Endothelial cell of umbilical vein (primary cell): ENCODE measurements at regions of chr3 and their contacts with region 1.

Region 1: DNA sequence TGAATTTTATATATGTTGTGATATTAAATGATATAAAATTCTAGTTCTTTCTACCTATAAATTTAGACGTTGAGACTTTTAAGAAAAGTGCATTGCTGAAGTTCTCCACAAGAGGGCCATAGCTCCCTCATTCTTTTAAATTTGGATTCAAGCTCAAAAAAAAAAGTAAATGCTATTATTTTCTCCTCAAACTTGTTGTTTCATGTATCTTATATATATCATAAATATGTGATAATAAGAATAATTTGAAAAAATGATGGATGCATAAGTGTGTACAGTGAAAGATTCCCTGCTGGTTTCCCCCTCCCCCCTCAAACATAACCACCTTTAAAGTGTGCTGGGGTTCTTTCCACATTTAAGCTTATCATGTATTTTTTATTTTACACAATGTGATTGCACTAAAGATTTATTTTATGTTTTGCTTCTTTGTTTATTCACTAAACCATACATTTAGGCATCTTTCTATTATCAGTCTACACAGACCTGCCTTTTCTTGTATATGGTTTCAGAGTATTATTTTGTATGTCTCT is 769.4 kb upstream of the GOLIM4 start:
- DNase-seq: peak; percentile 71
- H3K4me3 ChIP-seq: no peak overlapping the region
- H3K27ac ChIP-seq: no peak overlapping the region
- H3K4me1 ChIP-seq: no peaks in the 10 kb centered on the region
- H3K27me3 ChIP-seq: peaks cover 0 to 3% of the 10 kb centered on the region in 2 experiments
- CTCF ChIP-seq: peak; percentile 48 to 52
- POLR2A ChIP-seq: no peak

Region 2: DNA sequence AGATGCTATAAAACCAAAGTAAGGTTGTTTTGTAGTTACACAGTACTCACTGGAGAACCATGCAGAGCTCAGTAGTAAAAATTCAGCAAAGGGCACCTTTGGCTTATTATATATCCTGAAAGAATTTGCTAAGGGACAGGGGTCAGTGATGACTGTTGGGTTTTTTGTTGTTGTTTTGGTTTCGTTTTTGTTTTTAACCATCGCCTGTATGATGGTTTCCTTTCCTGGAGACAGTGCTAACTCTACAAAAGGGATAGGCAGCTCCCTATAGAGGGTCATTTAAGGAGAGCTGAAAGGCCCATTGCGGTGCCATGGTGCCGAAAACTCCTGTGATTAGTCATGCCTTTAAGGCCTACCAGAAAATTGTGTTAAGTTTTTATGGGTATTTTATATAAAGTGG is 651.2 kb before region 1 on chr3:
- CTCF ChIA-PET with region 1: interaction called, 15 read pairs
- POLR2A ChIA-PET with region 1: no interaction called
- dilution Hi-C with region 1: no loop called
- intact Hi-C with region 1: no loop called
- DNase-seq: no peak
- H3K4me3 ChIP-seq: no peak overlapping the region
- H3K27ac ChIP-seq: no peak overlapping the region
- H3K4me1 ChIP-seq: no peaks in the 10 kb centered on the region
- H3K27me3 ChIP-seq: peaks cover 2 to 5% of the 10 kb centered on the region in 2 experiments
- CTCF ChIP-seq: no peak
- POLR2A ChIP-seq: no peak

Region 3: DNA sequence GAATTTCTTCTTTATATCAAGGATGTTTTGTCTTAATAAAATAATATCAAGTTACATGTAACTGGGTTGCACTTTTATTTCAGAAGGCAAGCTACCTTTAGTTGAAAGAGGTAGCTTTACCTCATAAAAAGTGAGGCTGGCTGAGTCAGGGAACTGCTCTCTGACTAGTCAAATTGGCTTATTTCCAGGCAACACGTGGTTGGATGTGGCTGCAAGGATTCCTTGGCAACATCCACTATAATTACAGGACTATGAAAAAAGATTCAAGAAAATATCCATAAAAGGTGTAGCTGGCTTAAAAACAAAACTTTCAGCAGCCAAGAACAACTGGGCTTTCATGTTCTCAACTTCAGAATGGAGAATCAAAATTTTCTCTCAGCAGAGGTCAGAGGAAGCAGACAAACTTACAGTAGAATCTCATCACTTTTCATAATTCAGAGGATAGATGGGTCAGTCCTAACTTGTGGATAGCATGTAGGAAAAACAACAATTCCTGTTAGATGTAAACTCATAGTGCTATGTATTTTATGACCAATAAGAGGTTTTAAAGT is 19.3 kb after region 1 on chr3:
- CTCF ChIA-PET with region 1: interaction called, 18 read pairs
- POLR2A ChIA-PET with region 1: no interaction called
- dilution Hi-C with region 1: no loop called
- intact Hi-C with region 1: no loop called
- DNase-seq: peak; percentile 86
- H3K4me3 ChIP-seq: no peak overlapping the region
- H3K27ac ChIP-seq: no peak overlapping the region
- H3K4me1 ChIP-seq: peaks cover 12% of the 10 kb centered on the region
- H3K27me3 ChIP-seq: no peaks in the 10 kb centered on the region
- CTCF ChIP-seq: no peak
- POLR2A ChIP-seq: no peak

Region 4: DNA sequence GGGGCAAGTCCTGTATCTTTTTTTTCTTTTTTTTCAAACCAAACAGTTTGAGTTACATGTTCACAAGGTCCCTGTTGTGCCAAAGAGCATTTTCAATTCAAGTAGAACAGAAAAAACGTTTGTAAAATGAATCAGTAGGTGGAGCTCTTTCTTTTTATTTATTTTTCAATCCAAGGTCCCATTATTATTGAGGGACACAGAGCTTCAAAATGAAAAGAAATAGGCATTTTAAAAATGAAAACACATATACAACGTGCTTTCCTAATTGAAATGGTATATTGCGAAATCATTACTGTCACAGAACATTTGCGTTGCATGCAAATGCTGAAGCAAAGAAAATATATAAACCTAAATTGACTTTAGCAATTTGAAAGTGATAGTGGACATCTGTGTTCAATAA is 87.5 kb after region 1 on chr3:
- CTCF ChIA-PET with region 1: interaction called, 28 read pairs
- POLR2A ChIA-PET with region 1: no interaction called
- dilution Hi-C with region 1: no loop called
- intact Hi-C with region 1: loop called (anchors 5 kb)
- DNase-seq: peak; percentile 62
- H3K4me3 ChIP-seq: no peak overlapping the region
- H3K27ac ChIP-seq: no peak overlapping the region
- H3K4me1 ChIP-seq: no peaks in the 10 kb centered on the region
- H3K27me3 ChIP-seq: no peaks in the 10 kb centered on the region
- CTCF ChIP-seq: no peak
- POLR2A ChIP-seq: no peak

Region 5: GRCh38 chr3:169138849-169139420 is 273.8 kb after region 1 on chr3:
- CTCF ChIA-PET with region 1: interaction called, 12 read pairs
- POLR2A ChIA-PET with region 1: no interaction called
- dilution Hi-C with region 1: no loop called
- intact Hi-C with region 1: loop called (anchors 2 kb)
- DNase-seq: peak; percentile 61
- H3K4me3 ChIP-seq: peak overlapping the region in 2 of 3 experiments; percentile 17 to 26
- H3K27ac ChIP-seq: peak overlapping the region; percentile 41
- H3K4me1 ChIP-seq: peaks cover 83% of the 10 kb centered on the region
- H3K27me3 ChIP-seq: no peaks in the 10 kb centered on the region
- CTCF ChIP-seq: no peak
- POLR2A ChIP-seq: no peak

Region 6: GRCh38 chr3:169744366-169745054 is 879.4 kb after region 1 on chr3:
- CTCF ChIA-PET with region 1: interaction called, 97 read pairs
- POLR2A ChIA-PET with region 1: no interaction called
- dilution Hi-C with region 1: no loop called
- intact Hi-C with region 1: loop called (anchors 2 kb)
- DNase-seq: peak; percentile 74
- H3K4me3 ChIP-seq: no peak overlapping the region
- H3K27ac ChIP-seq: no peak overlapping the region
- H3K4me1 ChIP-seq: no peaks in the 10 kb centered on the region
- H3K27me3 ChIP-seq: peaks cover 2 to 13% of the 10 kb centered on the region in 2 experiments
- CTCF ChIP-seq: peak in 1 of 2 donors; percentile 21
- POLR2A ChIP-seq: no peak